Activated CD4-positive, alpha-beta memory T cell treated with anti-CD3 and anti-CD28 coated beads for 36 hours (primary cell): ENCODE measurements at regions of chr10 and their contacts with region 1.

Region 1: GRCh38 chr10:17023386-17024298 is 106.0 kb downstream of the CUBN start:
- DNase-seq: peak; percentile 86
- H3K4me3 Mint-ChIP-seq: peak overlapping the region; percentile 50
- H3K27ac Mint-ChIP-seq: peak overlapping the region; percentile 92
- H3K4me1 Mint-ChIP-seq: peaks cover 55% of the 10 kb centered on the region
- H3K27me3 Mint-ChIP-seq: peaks cover 3% of the 10 kb centered on the region

Region 2: GRCh38 chr10:16436758-16437539 is 586.7 kb before region 1 on chr10 and contains the start of gene PTER:
- CTCF ChIA-PET with region 1: no interaction called
- POLR2A ChIA-PET with region 1: no interaction called
- intact Hi-C with region 1: loop called (anchors 10 kb)
- DNase-seq: peak; percentile 99
- H3K4me3 Mint-ChIP-seq: peak within 1 kb of the TSS; percentile 86
- H3K27ac Mint-ChIP-seq: peak within 1 kb of the TSS; percentile 84
- H3K4me1 Mint-ChIP-seq: peaks cover 43% of the 10 kb centered on the region
- H3K27me3 Mint-ChIP-seq: no peaks in the 10 kb centered on the region
- total RNA-seq, gene PTER: 25.1 to 27.2 TPM

Region 3: GRCh38 chr10:16843252-16843870 is 180.3 kb before region 1 on chr10:
- CTCF ChIA-PET with region 1: no interaction called
- POLR2A ChIA-PET with region 1: no interaction called
- intact Hi-C with region 1: loop called (anchors 2 kb)
- DNase-seq: no peak
- H3K4me3 Mint-ChIP-seq: no peak overlapping the region
- H3K27ac Mint-ChIP-seq: no peak overlapping the region
- H3K4me1 Mint-ChIP-seq: peaks cover 4% of the 10 kb centered on the region
- H3K27me3 Mint-ChIP-seq: no peaks in the 10 kb centered on the region

Region 4: DNA sequence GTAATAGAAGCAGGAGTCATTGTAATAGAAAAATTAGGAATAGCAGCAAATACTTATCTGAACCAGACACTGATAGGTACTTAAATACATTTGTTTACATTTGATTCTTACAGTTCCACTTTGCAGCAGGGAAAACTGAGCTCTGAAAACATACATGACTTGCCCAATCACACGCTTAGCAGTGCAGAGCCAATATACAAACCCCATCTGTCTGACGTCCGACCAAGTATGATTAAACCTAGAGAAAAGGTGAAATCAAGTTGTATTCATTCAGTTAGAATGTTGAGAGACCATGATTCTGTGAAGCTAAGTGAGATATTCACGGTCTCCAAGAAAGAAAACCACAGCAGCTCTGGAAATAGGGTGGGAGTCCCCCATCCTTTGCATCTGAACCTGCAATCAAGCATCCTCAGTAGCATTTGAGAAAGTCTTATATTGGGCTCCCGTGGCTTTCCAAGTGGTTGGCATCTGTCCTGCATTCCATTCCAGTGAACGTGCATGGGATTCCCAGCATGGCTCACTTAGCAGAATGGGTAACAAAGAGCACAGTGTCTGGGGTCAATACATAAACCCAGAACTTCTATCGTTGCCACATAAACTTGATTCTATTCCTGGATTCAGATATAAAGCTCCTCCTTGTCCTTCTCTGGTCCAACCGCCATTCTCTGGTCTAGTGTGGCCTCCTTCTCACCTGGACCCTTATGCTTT is 57.7 kb before region 1 on chr10:
- CTCF ChIA-PET with region 1: no interaction called
- POLR2A ChIA-PET with region 1: interaction called, 3 read pairs
- intact Hi-C with region 1: loop called (anchors 1 kb)
- DNase-seq: no peak
- H3K4me3 Mint-ChIP-seq: no peak overlapping the region
- H3K27ac Mint-ChIP-seq: no peak overlapping the region
- H3K4me1 Mint-ChIP-seq: peaks cover 17% of the 10 kb centered on the region
- H3K27me3 Mint-ChIP-seq: no peaks in the 10 kb centered on the region

Region 5: GRCh38 chr10:16976803-16977202 is 46.8 kb before region 1 on chr10:
- CTCF ChIA-PET with region 1: no interaction called
- POLR2A ChIA-PET with region 1: no interaction called
- intact Hi-C with region 1: no loop called
- DNase-seq: no peak
- H3K4me3 Mint-ChIP-seq: no peak overlapping the region
- H3K27ac Mint-ChIP-seq: no peak overlapping the region
- H3K4me1 Mint-ChIP-seq: peaks cover 6% of the 10 kb centered on the region
- H3K27me3 Mint-ChIP-seq: no peaks in the 10 kb centered on the region

Region 6: DNA sequence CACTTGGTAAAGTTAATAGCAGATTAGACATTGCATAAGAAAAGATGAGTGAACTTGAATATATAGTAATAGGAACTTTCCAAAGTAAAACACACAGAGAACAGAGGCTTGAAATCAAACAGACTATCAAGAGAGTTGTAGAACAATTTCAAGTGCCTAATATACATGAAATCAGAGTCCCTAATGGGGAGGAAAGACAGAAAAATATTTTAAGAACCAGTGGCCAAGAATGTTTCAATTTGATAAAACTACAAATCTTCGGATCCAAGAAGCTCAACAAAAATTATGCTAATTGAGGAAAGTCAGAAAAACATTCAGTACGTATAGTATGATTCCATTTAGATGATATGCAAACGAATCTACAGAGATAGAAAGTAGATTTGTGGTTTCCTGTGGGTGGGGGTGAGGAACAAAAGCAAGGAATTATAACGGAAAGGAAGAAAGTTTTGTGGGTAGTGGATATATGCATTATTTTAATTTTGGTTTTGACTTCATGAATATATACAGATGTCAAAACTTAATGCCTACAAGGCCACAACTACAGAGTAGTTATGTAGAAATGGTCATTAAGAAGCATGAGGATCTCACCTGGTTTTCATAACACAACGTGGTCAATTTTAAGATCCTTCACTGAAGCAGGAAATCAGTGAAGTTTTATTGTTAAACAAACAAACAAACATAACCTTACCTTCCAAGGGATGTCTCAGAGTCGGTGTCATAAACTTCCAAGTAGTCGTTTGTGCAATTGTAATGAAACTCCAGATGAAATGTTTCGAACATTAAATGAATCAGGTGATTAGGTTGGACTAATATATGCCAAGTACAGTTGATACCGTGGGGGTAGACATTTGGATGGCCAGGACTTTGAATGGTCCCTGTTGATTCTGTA is 44.0 kb after region 1 on chr10:
- CTCF ChIA-PET with region 1: no interaction called
- POLR2A ChIA-PET with region 1: no interaction called
- intact Hi-C with region 1: loop called (anchors 2 kb)
- DNase-seq: no peak
- H3K4me3 Mint-ChIP-seq: no peak overlapping the region
- H3K27ac Mint-ChIP-seq: no peak overlapping the region
- H3K4me1 Mint-ChIP-seq: peaks cover 21% of the 10 kb centered on the region
- H3K27me3 Mint-ChIP-seq: no peaks in the 10 kb centered on the region

Region 7: GRCh38 chr10:17206210-17206709 is 182.6 kb after region 1 on chr10:
- CTCF ChIA-PET with region 1: no interaction called
- POLR2A ChIA-PET with region 1: interaction called, 6 read pairs
- intact Hi-C with region 1: loop called (anchors 1 kb)
- DNase-seq: peak; percentile 63
- H3K4me3 Mint-ChIP-seq: peak overlapping the region; percentile 31
- H3K27ac Mint-ChIP-seq: peak overlapping the region; percentile 84
- H3K4me1 Mint-ChIP-seq: peaks cover 50% of the 10 kb centered on the region
- H3K27me3 Mint-ChIP-seq: no peaks in the 10 kb centered on the region

Region 8: GRCh38 chr10:17228091-17228940 is 204.7 kb after region 1 on chr10 and contains the start of gene VIM:
- CTCF ChIA-PET with region 1: interaction called, 15 read pairs
- POLR2A ChIA-PET with region 1: interaction called, 36 read pairs
- intact Hi-C with region 1: loop called (anchors 1 kb)
- DNase-seq: peak; percentile 93
- H3K4me3 Mint-ChIP-seq: peak within 1 kb of the TSS; percentile 95
- H3K27ac Mint-ChIP-seq: peak within 1 kb of the TSS; percentile 87
- H3K4me1 Mint-ChIP-seq: peaks cover 42% of the 10 kb centered on the region
- H3K27me3 Mint-ChIP-seq: peaks cover 1% of the 10 kb centered on the region
- total RNA-seq, gene VIM: 515 to 525 TPM